ENCODE measurements at regions of chr9 and their contacts with region 1.

Region 1: GRCh38 chr9:34010979-34011378 is 37.7 kb downstream of the UBAP2 start:
- DNase-seq: no peak
- ATAC-seq: no peak
- H3K4me3 ChIP-seq: no peak overlapping the region
- H3K27ac ChIP-seq: no peak overlapping the region
- H3K4me1 ChIP-seq: no peaks in the 10 kb centered on the region
- H3K27me3 ChIP-seq: no peaks in the 10 kb centered on the region

Region 2: GRCh38 chr9:33942471-33943083 is 68.4 kb before region 1 on chr9:
- intact Hi-C with region 1: no loop called
- DNase-seq: no peak
- ATAC-seq: no peak
- H3K4me3 ChIP-seq: no peak overlapping the region
- H3K27ac ChIP-seq: no peak overlapping the region
- H3K4me1 ChIP-seq: no peaks in the 10 kb centered on the region
- H3K27me3 ChIP-seq: no peaks in the 10 kb centered on the region

Region 3: DNA sequence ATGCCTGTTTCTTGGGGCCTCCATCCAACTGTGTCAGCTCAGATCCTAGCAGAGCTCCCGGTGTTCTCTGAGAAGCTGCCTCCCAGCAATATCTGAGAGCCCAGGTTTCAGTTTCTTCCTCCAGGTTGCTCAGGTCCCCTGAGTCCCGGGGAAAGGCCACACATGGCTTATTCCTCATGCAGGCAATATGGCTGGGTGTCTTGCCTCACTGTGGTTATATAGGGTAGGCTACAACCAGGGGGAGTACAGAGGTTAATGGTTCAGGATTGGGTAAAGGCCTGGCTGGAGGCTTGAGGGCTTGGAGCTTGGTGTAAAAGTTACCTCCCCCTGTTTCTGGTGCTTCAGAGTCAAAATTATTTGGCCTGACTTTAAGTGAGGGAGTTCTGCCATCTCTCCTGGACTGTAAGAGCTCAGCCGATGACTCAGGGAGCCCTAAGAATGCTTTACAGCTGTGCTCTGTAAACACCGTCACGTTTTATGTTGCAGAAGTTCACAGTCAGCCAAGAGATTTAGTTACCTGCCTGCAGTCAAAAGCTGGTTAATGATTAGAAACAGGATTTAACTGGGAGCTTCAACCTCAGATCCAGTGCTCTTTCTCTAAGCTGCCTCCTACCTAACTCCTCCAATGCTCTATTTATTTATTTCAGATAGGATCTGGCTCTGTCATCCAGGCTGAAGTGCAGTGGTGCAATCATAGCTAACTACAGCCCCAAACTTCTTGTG is 62.0 kb after region 1 on chr9:
- intact Hi-C with region 1: loop called in 1 of 4 experiments (anchors 5 kb)
- DNase-seq: no peak
- ATAC-seq: peak; percentile 58 to 68
- H3K4me3 ChIP-seq: no peak overlapping the region
- H3K27ac ChIP-seq: peak overlapping the region; percentile 29
- H3K4me1 ChIP-seq: no peaks in the 10 kb centered on the region
- H3K27me3 ChIP-seq: no peaks in the 10 kb centered on the region

Measured in right cardiac atrium (tissue), 5 donors.